ENCODE measurements at regions of chr1 and their contacts with region 1.

Region 1: DNA sequence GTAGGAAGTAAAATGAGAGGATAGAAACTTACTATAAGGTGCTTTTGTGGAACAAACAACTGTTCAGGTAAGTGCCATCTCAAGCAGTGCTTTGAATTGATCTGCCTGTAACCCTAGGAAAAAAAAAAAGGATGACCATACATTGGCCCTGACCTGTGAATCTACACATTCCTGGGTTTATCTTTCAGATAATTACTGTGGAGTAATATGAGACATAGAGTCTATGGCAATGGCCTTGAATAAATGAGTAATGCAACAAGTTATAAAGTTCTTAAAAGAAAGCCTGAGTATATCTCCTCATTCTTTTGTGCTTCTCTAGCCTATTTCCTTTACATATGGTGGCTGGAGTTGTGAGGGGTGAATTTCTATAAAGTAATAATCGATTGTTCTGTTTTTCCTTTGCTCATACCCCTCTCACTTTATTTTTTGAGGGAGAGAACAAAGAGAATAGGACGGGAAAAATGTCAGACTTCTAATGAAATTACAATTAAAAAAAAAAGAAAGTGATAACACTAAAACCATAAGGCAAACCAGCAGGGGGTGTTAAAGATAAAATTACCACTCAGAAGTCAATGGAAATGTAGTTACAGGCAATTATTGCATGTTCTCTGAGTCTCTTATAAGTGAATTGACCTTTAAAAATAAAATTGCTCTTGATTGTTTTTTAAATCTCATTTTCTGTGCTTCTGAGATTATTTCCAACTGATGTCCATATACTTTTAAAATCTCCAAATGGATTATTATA is 12.4 kb upstream of the ATP1A1 start:
- DNase-seq: no peak
- ATAC-seq: no peak
- H3K4me3 ChIP-seq: no peak overlapping the region
- H3K27ac ChIP-seq: no peak overlapping the region
- H3K4me1 ChIP-seq: peaks cover 0 to 16% (median 6%) of the 10 kb centered on the region in 12 donors
- H3K27me3 ChIP-seq: no peaks in the 10 kb centered on the region
- CTCF ChIP-seq: peak; percentile 18 to 54 (median 45)
- POLR2A ChIP-seq: no peak

Region 2: GRCh38 chr1:116168277-116169097 is 192.1 kb before region 1 on chr1:
- intact Hi-C with region 1: loop called in 2 of 10 experiments (anchors 5 to 10 kb)
- DNase-seq: peak; percentile 84 to 87 (median 86)
- ATAC-seq: peak; percentile 35 to 93 (median 83)
- H3K4me3 ChIP-seq: peak overlapping the region; percentile 12 to 77 (median 60)
- H3K27ac ChIP-seq: peak overlapping the region; percentile 51 to 85 (median 64)
- H3K4me1 ChIP-seq: peaks cover 0 to 53% (median 28%) of the 10 kb centered on the region in 12 donors
- H3K27me3 ChIP-seq: no peaks in the 10 kb centered on the region
- CTCF ChIP-seq: peak; percentile 85 to 98 (median 94)
- POLR2A ChIP-seq: no peak

Region 3: GRCh38 chr1:116178837-116179236 is 181.8 kb before region 1 on chr1:
- intact Hi-C with region 1: loop called in 1 of 10 experiments (anchors 10 kb)
- DNase-seq: no peak
- ATAC-seq: peak in 1 of 4 donors; percentile 9
- H3K4me3 ChIP-seq: no peak overlapping the region
- H3K27ac ChIP-seq: no peak overlapping the region
- H3K4me1 ChIP-seq: peaks cover 0 to 15% (median 0%) of the 10 kb centered on the region in 12 donors
- H3K27me3 ChIP-seq: no peaks in the 10 kb centered on the region
- CTCF ChIP-seq: no peak
- POLR2A ChIP-seq: no peak

Region 4: GRCh38 chr1:116309089-116309870 is 51.3 kb before region 1 on chr1:
- intact Hi-C with region 1: loop called in 1 of 10 experiments (anchors 10 kb)
- DNase-seq: no peak
- ATAC-seq: no peak
- H3K4me3 ChIP-seq: no peak overlapping the region
- H3K27ac ChIP-seq: no peak overlapping the region
- H3K4me1 ChIP-seq: peaks cover 0 to 10% (median 0%) of the 10 kb centered on the region in 12 donors
- H3K27me3 ChIP-seq: no peaks in the 10 kb centered on the region
- CTCF ChIP-seq: no peak
- POLR2A ChIP-seq: no peak

Region 5: GRCh38 chr1:116403496-116404136 is 43.0 kb after region 1 on chr1:
- intact Hi-C with region 1: no loop called
- DNase-seq: no peak
- ATAC-seq: no peak
- H3K4me3 ChIP-seq: no peak overlapping the region
- H3K27ac ChIP-seq: peak overlapping the region in 5 of 12 donors; percentile 27 to 76 (median 33)
- H3K4me1 ChIP-seq: peaks cover 0 to 30% (median 4%) of the 10 kb centered on the region in 12 donors
- H3K27me3 ChIP-seq: no peaks in the 10 kb centered on the region
- CTCF ChIP-seq: no peak
- POLR2A ChIP-seq: no peak

Region 6: GRCh38 chr1:116492358-116492811 is 131.8 kb after region 1 on chr1:
- intact Hi-C with region 1: loop called in 6 of 10 experiments (anchors 5 kb)
- DNase-seq: no peak
- ATAC-seq: no peak
- H3K4me3 ChIP-seq: no peak overlapping the region
- H3K27ac ChIP-seq: no peak overlapping the region
- H3K4me1 ChIP-seq: peaks cover 0 to 47% (median 22%) of the 10 kb centered on the region in 12 donors
- H3K27me3 ChIP-seq: no peaks in the 10 kb centered on the region
- CTCF ChIP-seq: no peak
- POLR2A ChIP-seq: no peak

Measured in heart left ventricle (tissue), 16 donors.